ENCODE measurements at regions of chr6 and their contacts with region 1.

Region 1: DNA sequence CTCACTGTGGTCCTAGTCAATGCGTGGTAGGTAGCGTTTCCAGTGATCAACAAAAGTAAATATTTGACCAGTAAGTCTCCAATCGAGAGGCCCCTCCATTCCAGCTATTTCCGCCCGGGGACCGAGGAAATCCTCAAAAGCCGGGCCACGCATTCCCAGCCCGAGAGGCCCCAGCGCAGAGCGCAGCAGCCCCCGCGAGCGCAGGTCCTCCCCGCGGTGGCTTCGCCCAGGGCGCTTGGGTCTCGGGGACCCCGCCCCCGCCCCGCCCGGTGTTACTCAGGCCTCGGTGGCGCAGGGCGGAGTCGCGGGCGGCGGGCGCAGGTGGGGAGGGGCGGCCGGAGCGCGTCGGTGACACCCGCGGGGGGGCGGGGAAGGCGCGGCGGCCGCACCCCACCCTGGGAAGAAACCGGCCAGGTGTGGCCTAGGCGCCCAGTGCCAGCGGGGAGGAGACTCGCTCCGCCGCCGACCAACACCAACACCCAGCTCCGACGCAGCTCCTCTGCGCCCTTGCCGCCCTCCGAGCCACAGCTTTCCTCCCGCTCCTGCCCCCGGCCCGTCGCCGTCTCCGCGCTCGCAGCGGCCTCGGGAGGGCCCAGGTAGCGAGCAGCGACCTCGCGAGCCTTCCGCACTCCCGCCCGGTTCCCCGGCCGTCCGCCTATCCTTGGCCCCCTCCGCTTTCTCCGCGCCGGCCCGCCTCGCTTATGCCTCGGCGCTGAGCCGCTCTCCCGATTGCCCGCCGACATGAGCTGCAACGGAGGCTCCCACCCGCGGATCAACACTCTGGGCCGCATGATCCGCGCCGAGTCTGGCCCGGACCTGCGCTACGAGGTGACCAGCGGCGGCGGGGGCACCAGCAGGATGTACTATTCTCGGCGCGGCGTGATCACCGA is at the start of gene DSP:
- DNase-seq: peak; percentile 96
- ATAC-seq: peak; percentile 83
- H3K4me3 ChIP-seq: peak within 1 kb of the TSS; percentile 94 to 100 (median 95)
- H3K27ac ChIP-seq: peak within 1 kb of the TSS; percentile 90
- H3K4me1 ChIP-seq: peaks cover 53% of the 10 kb centered on the region
- H3K27me3 ChIP-seq: peaks cover 0 to 3% of the 10 kb centered on the region in 2 experiments; a peak in 1 of 5 replicates
- CTCF ChIP-seq: peak; percentile 14; the same call in 1 of the 2 replicates
- EP300 ChIP-seq: peak; percentile 46 to 89; a peak in 3 of 4 replicates
- POLR2A ChIP-seq: peak; percentile 92 to 95
- RAD21 ChIP-seq: peak; percentile 66
- total RNA-seq, gene DSP: 89.8 and 133 TPM in 2 replicates

Region 2: DNA sequence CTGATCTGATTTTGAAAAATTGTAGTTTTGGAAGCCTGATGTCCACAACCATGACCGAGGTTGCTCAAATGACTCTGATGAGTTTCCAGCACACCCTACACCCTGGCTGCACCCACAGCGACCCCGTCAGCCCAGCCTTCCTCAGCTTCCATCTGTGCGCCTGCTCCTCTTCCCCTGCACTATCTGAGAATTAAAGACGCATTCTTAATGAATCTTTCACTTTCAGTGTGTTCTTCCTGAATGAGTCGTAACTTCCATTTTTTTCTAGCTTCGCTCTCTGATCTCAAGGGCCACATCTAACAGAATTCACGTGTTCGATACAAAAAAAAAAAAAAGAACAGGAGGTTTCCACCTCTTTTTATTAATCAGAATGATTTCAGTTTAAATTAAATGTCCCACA is 454.9 kb before region 1 on chr6:
- CTCF ChIA-PET with region 1: no interaction called
- POLR2A ChIA-PET with region 1: no interaction called
- in situ Hi-C with region 1: no loop called
- intact Hi-C with region 1: no loop called
- DNase-seq: no peak
- ATAC-seq: no peak
- H3K4me3 ChIP-seq: no peak overlapping the region
- H3K27ac ChIP-seq: no peak overlapping the region
- H3K4me1 ChIP-seq: peaks cover 13% of the 10 kb centered on the region
- H3K27me3 ChIP-seq: peaks cover 0 to 11% of the 10 kb centered on the region in 2 experiments; a peak in 1 of 5 replicates
- CTCF ChIP-seq: no peak
- EP300 ChIP-seq: no peak
- POLR2A ChIP-seq: no peak
- RAD21 ChIP-seq: no peak

Region 3: GRCh38 chr6:7166410-7167305 is 374.8 kb before region 1 on chr6:
- CTCF ChIA-PET with region 1: no interaction called
- POLR2A ChIA-PET with region 1: no interaction called
- in situ Hi-C with region 1: no loop called
- intact Hi-C with region 1: loop called (anchors 10 kb)
- DNase-seq: no peak
- ATAC-seq: peak; percentile 8; the same call in 2 of the 3 replicates
- H3K4me3 ChIP-seq: 0 out of 6 replicates have a peak overlapping the region, but pooled peaks of 1 of the 3 experiments have one; percentile 6
- H3K27ac ChIP-seq: peak overlapping the region; percentile 88
- H3K4me1 ChIP-seq: peaks cover 100% of the 10 kb centered on the region
- H3K27me3 ChIP-seq: no peaks in the 10 kb centered on the region
- CTCF ChIP-seq: no peak
- EP300 ChIP-seq: peak in 1 of 2 experiments; percentile 51; a peak in 1 of 4 replicates
- POLR2A ChIP-seq: no peak
- RAD21 ChIP-seq: no peak

Region 4: DNA sequence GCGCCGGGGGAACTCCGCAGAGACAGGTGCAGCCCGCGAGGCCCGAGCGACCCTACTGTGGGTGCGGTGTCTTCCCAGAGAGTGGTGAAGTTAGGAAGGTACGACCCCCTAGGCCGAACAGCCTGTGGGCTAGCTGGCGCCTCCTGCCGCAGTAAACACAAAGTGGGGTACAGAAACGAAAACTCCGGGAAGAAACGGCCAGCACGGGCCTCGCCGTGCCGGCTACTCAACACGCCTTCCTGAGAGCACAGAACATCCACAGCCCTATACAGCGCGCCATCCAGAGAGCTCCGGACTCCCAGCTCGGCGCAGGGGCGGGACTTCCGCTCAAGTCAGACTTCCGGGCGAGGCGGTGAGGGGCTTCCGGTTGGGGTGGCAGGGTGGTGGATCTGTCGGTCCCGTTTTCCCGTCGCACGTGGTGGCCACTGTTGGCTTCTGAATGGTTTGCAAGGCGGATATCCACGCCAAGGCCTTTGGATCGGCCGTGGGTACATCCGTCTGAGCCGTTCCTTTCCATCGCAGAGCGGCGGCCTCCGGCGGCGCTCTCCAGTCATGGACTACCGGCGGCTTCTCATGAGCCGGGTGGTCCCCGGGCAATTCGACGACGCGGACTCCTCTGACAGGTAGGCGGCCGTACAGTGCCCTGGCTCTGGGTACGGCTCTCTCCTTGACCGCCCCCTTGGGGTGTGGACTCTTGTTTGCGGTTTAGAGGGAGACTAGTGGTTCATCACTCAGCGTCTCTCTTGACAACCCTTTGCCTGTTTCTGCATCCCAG is 151.8 kb before region 1 on chr6 and contains the starts of genes CAGE1 and RIOK1:
- CTCF ChIA-PET with region 1: no interaction called
- POLR2A ChIA-PET with region 1: interaction called, 15 read pairs
- in situ Hi-C with region 1: no loop called
- intact Hi-C with region 1: no loop called
- DNase-seq: peak; percentile 96
- ATAC-seq: peak; percentile 99
- H3K4me3 ChIP-seq: peak within 1 kb of the TSS; percentile 78 to 87 (median 84)
- H3K27ac ChIP-seq: peak within 1 kb of the TSS; percentile 88
- H3K4me1 ChIP-seq: peaks cover 37% of the 10 kb centered on the region
- H3K27me3 ChIP-seq: no peaks in the 10 kb centered on the region; a peak in 1 of 5 replicates
- CTCF ChIP-seq: peak; percentile 52
- EP300 ChIP-seq: peak in 1 of 2 experiments; percentile 17; a peak in 1 of 4 replicates
- POLR2A ChIP-seq: peak; percentile 96 to 97
- RAD21 ChIP-seq: peak; percentile 62
- total RNA-seq, gene CAGE1: 0.15 TPM in 1 of 2 replicates, not detected in the other
- total RNA-seq, gene RIOK1: 37.8 and 45.7 TPM in 2 replicates

Region 5: DNA sequence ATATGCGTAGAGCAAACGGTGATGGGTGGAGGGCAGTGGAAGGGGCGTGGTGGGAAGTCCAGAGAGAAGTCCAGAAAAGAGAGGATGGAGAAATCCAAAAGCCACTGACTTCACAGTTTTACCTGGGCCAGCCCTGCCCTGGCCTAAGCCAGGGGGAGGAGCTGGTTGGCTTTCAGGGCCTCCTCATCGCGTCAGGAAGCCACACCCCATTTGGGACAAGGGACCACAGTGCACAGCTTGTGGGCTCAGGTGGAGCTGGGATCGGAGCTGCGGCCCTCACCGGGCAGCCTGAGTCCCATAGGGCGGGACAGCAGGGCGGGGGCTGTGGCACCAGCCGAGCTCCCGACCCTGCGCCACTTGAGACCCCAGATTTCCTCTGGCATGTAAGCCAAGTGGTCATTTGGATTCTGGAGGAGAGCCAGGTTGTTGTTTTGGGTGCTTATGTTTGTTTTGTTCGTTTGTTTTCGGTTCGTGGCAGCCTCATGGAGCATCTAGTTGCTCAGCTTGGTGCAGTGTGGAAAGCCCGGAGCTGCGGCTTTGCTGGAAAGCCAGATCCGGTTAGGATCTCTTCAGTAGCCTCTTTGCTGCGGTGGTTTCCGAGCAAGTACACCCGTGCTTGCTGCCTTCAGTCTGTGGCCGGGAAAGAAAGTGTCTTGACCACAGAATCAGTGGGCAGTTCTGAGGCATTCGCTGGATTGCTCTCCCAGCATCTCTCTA is 109.6 kb before region 1 on chr6:
- CTCF ChIA-PET with region 1: no interaction called
- POLR2A ChIA-PET with region 1: interaction called, 42 read pairs
- in situ Hi-C with region 1: loop called (anchors 5 kb)
- intact Hi-C with region 1: no loop called
- DNase-seq: peak; percentile 57
- ATAC-seq: peak; percentile 83
- H3K4me3 ChIP-seq: peak overlapping the region; percentile 51 to 73 (median 58)
- H3K27ac ChIP-seq: no peak overlapping the region
- H3K4me1 ChIP-seq: peaks cover 39% of the 10 kb centered on the region
- H3K27me3 ChIP-seq: 0 out of 5 replicates have a peak, but pooled peaks cover 0 to 5% of the 10 kb centered on the region in 2 experiments
- CTCF ChIP-seq: peak; percentile 31
- EP300 ChIP-seq: no peak
- POLR2A ChIP-seq: no peak
- RAD21 ChIP-seq: 0 out of 2 replicates have a peak, but pooled peaks have one; percentile 14

Region 6: GRCh38 chr6:7463785-7464184 is 77.6 kb before region 1 on chr6:
- CTCF ChIA-PET with region 1: no interaction called
- POLR2A ChIA-PET with region 1: interaction called, 13 read pairs
- in situ Hi-C with region 1: no loop called
- intact Hi-C with region 1: no loop called
- DNase-seq: peak; percentile 81
- ATAC-seq: peak; percentile 75
- H3K4me3 ChIP-seq: peak overlapping the region in 1 of 3 experiments; percentile 8; a peak in 1 of 6 replicates
- H3K27ac ChIP-seq: peak overlapping the region; percentile 30
- H3K4me1 ChIP-seq: peaks cover 70% of the 10 kb centered on the region
- H3K27me3 ChIP-seq: no peaks in the 10 kb centered on the region
- CTCF ChIP-seq: no peak
- EP300 ChIP-seq: peak in 1 of 2 experiments; percentile 73; a peak in 2 of 4 replicates
- POLR2A ChIP-seq: no peak
- RAD21 ChIP-seq: no peak

Region 7: GRCh38 chr6:7580927-7581618 is 39.7 kb after region 1 on chr6:
- CTCF ChIA-PET with region 1: no interaction called
- POLR2A ChIA-PET with region 1: interaction called, 10 read pairs
- in situ Hi-C with region 1: no loop called
- intact Hi-C with region 1: no loop called
- DNase-seq: peak; percentile 80
- ATAC-seq: peak; percentile 73
- H3K4me3 ChIP-seq: peak overlapping the region in 1 of 3 experiments; percentile 35; a peak in 2 of 6 replicates
- H3K27ac ChIP-seq: peak overlapping the region; percentile 63
- H3K4me1 ChIP-seq: peaks cover 34% of the 10 kb centered on the region
- H3K27me3 ChIP-seq: no peaks in the 10 kb centered on the region
- CTCF ChIP-seq: no peak
- EP300 ChIP-seq: peak in 1 of 2 experiments; percentile 43; a peak in 1 of 4 replicates
- POLR2A ChIP-seq: peak in 1 of 2 experiments; percentile 41; a peak in 1 of 4 replicates
- RAD21 ChIP-seq: no peak

Region 8: GRCh38 chr6:7673063-7673536 is 131.7 kb after region 1 on chr6:
- CTCF ChIA-PET with region 1: no interaction called
- POLR2A ChIA-PET with region 1: no interaction called
- in situ Hi-C with region 1: no loop called
- intact Hi-C with region 1: no loop called
- DNase-seq: no peak
- ATAC-seq: peak; percentile 45
- H3K4me3 ChIP-seq: no peak overlapping the region
- H3K27ac ChIP-seq: no peak overlapping the region
- H3K4me1 ChIP-seq: no peaks in the 10 kb centered on the region
- H3K27me3 ChIP-seq: peaks cover 1 to 32% of the 10 kb centered on the region in 2 experiments; a peak in 2 of 5 replicates
- CTCF ChIP-seq: no peak
- EP300 ChIP-seq: no peak
- POLR2A ChIP-seq: no peak
- RAD21 ChIP-seq: no peak

Region 9: GRCh38 chr6:7865781-7866180 is 324.4 kb after region 1 on chr6:
- CTCF ChIA-PET with region 1: no interaction called
- POLR2A ChIA-PET with region 1: no interaction called
- in situ Hi-C with region 1: no loop called
- intact Hi-C with region 1: no loop called
- DNase-seq: no peak
- ATAC-seq: no peak
- H3K4me3 ChIP-seq: no peak overlapping the region
- H3K27ac ChIP-seq: no peak overlapping the region
- H3K4me1 ChIP-seq: no peaks in the 10 kb centered on the region
- H3K27me3 ChIP-seq: peaks cover 3 to 28% of the 10 kb centered on the region in 2 experiments; a peak in 3 of 5 replicates
- CTCF ChIP-seq: no peak
- EP300 ChIP-seq: no peak
- POLR2A ChIP-seq: no peak
- RAD21 ChIP-seq: no peak

Measured in HepG2 (cell line).